Mammary epithelial cell (primary cell): ENCODE measurements at regions of chr7 and their contacts with region 1.

Region 1: GRCh38 chr7:28096713-28097112 is 83.9 kb downstream of the JAZF1 start:
- DNase-seq: no peak
- H3K4me3 ChIP-seq: no peak overlapping the region
- H3K27ac ChIP-seq: no peak overlapping the region
- H3K4me1 ChIP-seq: no peaks in the 10 kb centered on the region
- H3K27me3 ChIP-seq: no peaks in the 10 kb centered on the region
- CTCF ChIP-seq: peak; percentile 80 to 89

Region 2: GRCh38 chr7:27689591-27690164 is 407.0 kb before region 1 on chr7:
- CTCF ChIA-PET with region 1: no interaction called
- dilution Hi-C with region 1: no loop called
- in situ Hi-C with region 1: no loop called
- intact Hi-C with region 1: loop called (anchors 5 kb)
- DNase-seq: peak; percentile 32
- H3K4me3 ChIP-seq: no peak overlapping the region
- H3K27ac ChIP-seq: no peak overlapping the region
- H3K4me1 ChIP-seq: peaks cover 6% of the 10 kb centered on the region
- H3K27me3 ChIP-seq: no peaks in the 10 kb centered on the region
- CTCF ChIP-seq: peak; percentile 40 to 60

Region 3: GRCh38 chr7:27739909-27740448 is 356.7 kb before region 1 on chr7 and contains the start of gene TAX1BP1:
- CTCF ChIA-PET with region 1: no interaction called
- dilution Hi-C with region 1: no loop called
- in situ Hi-C with region 1: no loop called
- intact Hi-C with region 1: loop called (anchors 5 kb)
- DNase-seq: peak; percentile 92
- H3K4me3 ChIP-seq: peak within 1 kb of the TSS; percentile 80 to 97 (median 96)
- H3K27ac ChIP-seq: peak within 1 kb of the TSS; percentile 96
- H3K4me1 ChIP-seq: peaks cover 11% of the 10 kb centered on the region
- H3K27me3 ChIP-seq: no peaks in the 10 kb centered on the region
- CTCF ChIP-seq: no peak
- total RNA-seq, gene TAX1BP1: 84.1 to 93.5 TPM

Region 4: GRCh38 chr7:27774717-27775328 is 321.9 kb before region 1 on chr7:
- CTCF ChIA-PET with region 1: interaction called, 3 read pairs
- dilution Hi-C with region 1: no loop called
- in situ Hi-C with region 1: no loop called
- intact Hi-C with region 1: loop called (anchors 10 kb)
- DNase-seq: peak; percentile 8
- H3K4me3 ChIP-seq: no peak overlapping the region
- H3K27ac ChIP-seq: no peak overlapping the region
- H3K4me1 ChIP-seq: peaks cover 9% of the 10 kb centered on the region
- H3K27me3 ChIP-seq: no peaks in the 10 kb centered on the region
- CTCF ChIP-seq: peak; percentile 53 to 58

Region 5: GRCh38 chr7:27834179-27834921 is 262.4 kb before region 1 on chr7:
- CTCF ChIA-PET with region 1: no interaction called
- dilution Hi-C with region 1: no loop called
- in situ Hi-C with region 1: no loop called
- intact Hi-C with region 1: loop called (anchors 10 kb)
- DNase-seq: no peak
- H3K4me3 ChIP-seq: no peak overlapping the region
- H3K27ac ChIP-seq: no peak overlapping the region
- H3K4me1 ChIP-seq: no peaks in the 10 kb centered on the region
- H3K27me3 ChIP-seq: no peaks in the 10 kb centered on the region
- CTCF ChIP-seq: no peak

Region 6: GRCh38 chr7:27933671-27934565 is 162.8 kb before region 1 on chr7:
- CTCF ChIA-PET with region 1: no interaction called
- dilution Hi-C with region 1: no loop called
- in situ Hi-C with region 1: no loop called
- intact Hi-C with region 1: loop called (anchors 2 kb)
- DNase-seq: no peak
- H3K4me3 ChIP-seq: no peak overlapping the region
- H3K27ac ChIP-seq: no peak overlapping the region
- H3K4me1 ChIP-seq: no peaks in the 10 kb centered on the region
- H3K27me3 ChIP-seq: no peaks in the 10 kb centered on the region
- CTCF ChIP-seq: peak; percentile 17 to 31

Region 7: GRCh38 chr7:28179120-28180030 is 82.7 kb after region 1 on chr7:
- CTCF ChIA-PET with region 1: no interaction called
- dilution Hi-C with region 1: no loop called
- in situ Hi-C with region 1: no loop called
- intact Hi-C with region 1: loop called (anchors 2 kb)
- DNase-seq: peak; percentile 63
- H3K4me3 ChIP-seq: peak overlapping the region; percentile 65 to 93 (median 75)
- H3K27ac ChIP-seq: peak overlapping the region; percentile 73
- H3K4me1 ChIP-seq: peaks cover 39% of the 10 kb centered on the region
- H3K27me3 ChIP-seq: no peaks in the 10 kb centered on the region
- CTCF ChIP-seq: no peak